Naive thymus-derived CD4-positive, alpha-beta T cell (primary cell): ENCODE measurements at regions of chr22 and their contacts with region 1.

Region 1: DNA sequence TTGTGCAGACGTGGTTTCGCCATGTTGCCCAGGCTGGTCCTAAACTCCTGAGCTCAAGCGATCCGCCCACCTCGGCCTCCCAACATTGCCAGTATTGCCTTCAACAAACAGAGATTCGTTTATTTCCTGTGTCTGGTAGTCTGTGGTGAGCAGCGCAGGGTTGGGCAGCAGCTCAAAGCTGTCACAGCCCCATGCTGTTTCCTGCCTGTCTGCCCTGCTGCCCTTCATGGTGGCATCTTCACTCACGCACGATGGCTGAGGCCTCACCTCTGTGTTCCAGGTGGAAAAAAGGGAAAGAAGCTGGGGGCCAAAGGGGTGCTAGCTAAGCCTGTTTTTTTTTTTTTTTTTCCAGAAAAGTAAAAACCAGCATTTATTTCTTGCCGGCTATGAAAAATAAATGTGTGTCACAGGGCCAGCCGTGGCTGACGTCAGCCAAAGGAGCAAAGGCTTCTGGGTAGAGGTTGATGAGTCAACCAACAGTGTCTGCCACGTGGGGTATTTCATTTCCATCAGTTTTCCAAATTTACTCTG is 28.8 kb downstream of the TBC1D22A start:
- DNase-seq: peak; percentile 51 to 90 (median 81)
- ATAC-seq: peak; percentile 97
- H3K4me3 ChIP-seq: peak overlapping the region; percentile 33
- H3K4me3 Mint-ChIP-seq: peak overlapping the region; percentile 54 to 90 (median 84)
- H3K27ac ChIP-seq: peak overlapping the region; percentile 81
- H3K27ac Mint-ChIP-seq: peak overlapping the region; percentile 99 to 100 (median 100)
- H3K4me1 ChIP-seq: peaks cover 30 to 35% of the 10 kb centered on the region in 2 donors
- H3K4me1 Mint-ChIP-seq: peaks cover 27 to 62% (median 49%) of the 10 kb centered on the region in 7 donors
- H3K27me3 ChIP-seq: no peaks in the 10 kb centered on the region
- H3K27me3 Mint-ChIP-seq: no peaks in the 10 kb centered on the region

Region 2: DNA sequence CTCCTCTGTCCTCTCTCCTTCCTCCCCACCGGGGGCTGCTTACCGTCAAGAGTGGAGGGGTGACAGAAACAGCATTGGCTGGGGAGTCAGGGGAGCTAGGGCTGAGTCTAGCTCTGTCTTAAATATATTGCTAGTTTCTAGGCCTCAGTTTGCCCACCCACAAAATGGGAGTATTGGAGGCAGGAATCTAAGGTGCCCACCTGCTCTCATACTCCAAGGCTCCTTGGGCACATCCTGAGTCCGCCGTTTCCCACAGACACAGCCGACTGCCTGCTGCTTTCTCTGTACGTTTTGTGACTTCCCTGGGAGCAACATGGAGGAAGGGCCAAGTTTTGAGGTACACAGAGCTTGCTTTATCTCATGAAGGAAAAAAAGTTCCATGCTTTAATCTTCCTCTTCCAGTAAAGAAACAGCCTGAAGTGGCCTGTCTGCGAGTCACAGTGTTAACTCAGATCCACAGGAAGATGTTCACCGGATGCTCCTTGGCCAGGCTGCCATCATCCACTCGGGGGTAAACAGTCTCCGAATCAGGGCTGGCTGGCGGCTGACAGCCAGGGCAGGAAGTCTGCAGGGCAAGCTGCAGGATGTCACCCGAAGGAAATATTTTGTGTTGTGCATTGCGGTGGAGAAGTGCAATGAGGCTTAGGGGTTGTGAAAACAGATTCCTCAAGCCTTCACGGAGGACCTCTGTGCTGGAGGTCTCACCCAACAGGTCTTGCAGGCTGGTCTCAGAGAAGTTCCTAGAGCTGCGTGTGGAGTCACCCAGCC is 42.2 kb before region 1 on chr22:
- CTCF ChIA-PET with region 1: no interaction called
- POLR2A ChIA-PET with region 1: interaction called, 22 read pairs
- intact Hi-C with region 1: no loop called
- DNase-seq: peak in 8 of 9 donors; percentile 35 to 83 (median 74)
- ATAC-seq: peak; percentile 64
- H3K4me3 ChIP-seq: peak overlapping the region; percentile 54
- H3K4me3 Mint-ChIP-seq: peak overlapping the region; percentile 63 to 87 (median 81)
- H3K27ac ChIP-seq: peak overlapping the region; percentile 66
- H3K27ac Mint-ChIP-seq: peak overlapping the region; percentile 87 to 99 (median 96)
- H3K4me1 ChIP-seq: peaks cover 29% of the 10 kb centered on the region in 2 donors
- H3K4me1 Mint-ChIP-seq: peaks cover 23 to 34% (median 28%) of the 10 kb centered on the region in 7 donors
- H3K27me3 ChIP-seq: no peaks in the 10 kb centered on the region
- H3K27me3 Mint-ChIP-seq: peaks cover 0 to 3% (median 0%) of the 10 kb centered on the region in 5 donors

Region 3: GRCh38 chr22:46774253-46774979 is 16.9 kb before region 1 on chr22:
- CTCF ChIA-PET with region 1: no interaction called
- POLR2A ChIA-PET with region 1: interaction called, 11 read pairs
- intact Hi-C with region 1: loop called in 1 of 2 experiments (anchors 2 kb)
- DNase-seq: no peak
- ATAC-seq: peak; percentile 70
- H3K4me3 ChIP-seq: peak overlapping the region; percentile 17
- H3K4me3 Mint-ChIP-seq: peak overlapping the region; percentile 60 to 84 (median 68)
- H3K27ac ChIP-seq: peak overlapping the region; percentile 70
- H3K27ac Mint-ChIP-seq: peak overlapping the region; percentile 53 to 95 (median 88)
- H3K4me1 ChIP-seq: peaks cover 37 to 50% of the 10 kb centered on the region in 2 donors
- H3K4me1 Mint-ChIP-seq: peaks cover 59 to 87% (median 70%) of the 10 kb centered on the region in 7 donors
- H3K27me3 ChIP-seq: no peaks in the 10 kb centered on the region
- H3K27me3 Mint-ChIP-seq: no peaks in the 10 kb centered on the region

Region 4: DNA sequence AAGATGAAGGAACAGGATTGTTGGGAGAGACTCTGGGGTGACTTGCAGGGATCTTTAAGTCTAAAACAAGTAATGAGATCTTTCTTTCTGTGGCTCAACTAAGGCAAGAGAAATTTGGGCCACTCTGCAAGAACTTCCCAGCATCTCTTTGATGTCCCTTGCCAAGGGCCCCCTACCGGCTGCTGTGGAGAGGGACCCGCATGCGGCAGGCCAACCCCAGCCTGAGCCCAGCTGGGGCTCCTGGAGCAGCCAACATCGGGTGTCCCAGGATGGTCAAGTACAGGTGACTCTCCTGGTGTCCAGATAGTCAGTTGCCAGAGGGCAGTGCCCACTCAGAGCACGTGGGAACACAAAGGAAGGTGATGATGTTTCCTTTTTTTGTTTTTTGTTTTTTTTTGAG is 334.3 kb after region 1 on chr22:
- CTCF ChIA-PET with region 1: no interaction called
- POLR2A ChIA-PET with region 1: no interaction called
- intact Hi-C with region 1: no loop called
- DNase-seq: no peak
- ATAC-seq: no peak
- H3K4me3 ChIP-seq: no peak overlapping the region
- H3K4me3 Mint-ChIP-seq: no peak overlapping the region
- H3K27ac ChIP-seq: no peak overlapping the region
- H3K27ac Mint-ChIP-seq: peak overlapping the region in 3 of 9 donors; percentile 17 to 67 (median 22)
- H3K4me1 ChIP-seq: no peaks in the 10 kb centered on the region
- H3K4me1 Mint-ChIP-seq: peaks cover 2 to 21% (median 12%) of the 10 kb centered on the region in 7 donors
- H3K27me3 ChIP-seq: no peaks in the 10 kb centered on the region
- H3K27me3 Mint-ChIP-seq: no peaks in the 10 kb centered on the region